ENCODE measurements at regions of chr11 and their contacts with region 1.

Region 1: GRCh38 chr11:86559311-86559945 is 113.0 kb downstream of the ME3 start:
- DNase-seq: peak in 4 of 5 donors; percentile 48 to 80 (median 55)
- ATAC-seq: peak; percentile 76 to 86 (median 82)
- H3K4me3 ChIP-seq: no peak overlapping the region
- H3K27ac ChIP-seq: peak overlapping the region; percentile 64 to 91 (median 80)
- H3K4me1 ChIP-seq: peaks cover 7 to 37% (median 27%) of the 10 kb centered on the region in 12 donors
- H3K27me3 ChIP-seq: no peaks in the 10 kb centered on the region
- CTCF ChIP-seq: no peak
- POLR2A ChIP-seq: no peak

Region 2: DNA sequence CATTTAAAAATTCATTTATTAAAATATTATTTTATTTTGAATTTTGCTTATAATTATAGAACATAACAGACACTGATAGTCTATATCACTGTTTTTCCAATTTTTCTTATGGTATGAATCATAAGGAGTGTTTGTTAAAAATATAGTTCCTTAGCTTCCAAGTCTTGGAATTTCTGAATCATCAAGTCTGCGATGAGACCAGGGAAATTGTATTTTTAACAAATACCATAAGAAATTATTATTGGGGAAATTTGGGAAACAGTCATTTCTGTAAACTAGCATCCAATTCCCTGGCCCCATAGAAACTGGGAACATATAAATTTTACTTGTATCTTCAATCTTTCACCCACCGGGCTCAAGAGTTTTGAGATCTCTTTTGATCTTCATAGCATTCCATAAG is 452.5 kb before region 1 on chr11:
- intact Hi-C with region 1: no loop called
- DNase-seq: no peak
- ATAC-seq: no peak
- H3K4me3 ChIP-seq: no peak overlapping the region
- H3K27ac ChIP-seq: no peak overlapping the region
- H3K4me1 ChIP-seq: peaks cover 0 to 6% (median 0%) of the 10 kb centered on the region in 12 donors
- H3K27me3 ChIP-seq: no peaks in the 10 kb centered on the region
- CTCF ChIP-seq: no peak
- POLR2A ChIP-seq: no peak

Region 3: GRCh38 chr11:86483940-86484794 is 75.3 kb before region 1 on chr11:
- intact Hi-C with region 1: loop called in 3 of 10 experiments (anchors 5 to 10 kb)
- DNase-seq: peak in 3 of 5 donors; percentile 50 to 71 (median 54)
- ATAC-seq: peak; percentile 33 to 86 (median 61)
- H3K4me3 ChIP-seq: no peak overlapping the region
- H3K27ac ChIP-seq: peak overlapping the region; percentile 25 to 80 (median 50)
- H3K4me1 ChIP-seq: peaks cover 0 to 38% (median 19%) of the 10 kb centered on the region in 12 donors
- H3K27me3 ChIP-seq: no peaks in the 10 kb centered on the region
- CTCF ChIP-seq: no peak
- POLR2A ChIP-seq: no peak

Measured in heart left ventricle (tissue), 16 donors.